Posterior vena cava (tissue), 2 donors: ENCODE measurements at regions of chr13 and their contacts with region 1.

Region 1: DNA sequence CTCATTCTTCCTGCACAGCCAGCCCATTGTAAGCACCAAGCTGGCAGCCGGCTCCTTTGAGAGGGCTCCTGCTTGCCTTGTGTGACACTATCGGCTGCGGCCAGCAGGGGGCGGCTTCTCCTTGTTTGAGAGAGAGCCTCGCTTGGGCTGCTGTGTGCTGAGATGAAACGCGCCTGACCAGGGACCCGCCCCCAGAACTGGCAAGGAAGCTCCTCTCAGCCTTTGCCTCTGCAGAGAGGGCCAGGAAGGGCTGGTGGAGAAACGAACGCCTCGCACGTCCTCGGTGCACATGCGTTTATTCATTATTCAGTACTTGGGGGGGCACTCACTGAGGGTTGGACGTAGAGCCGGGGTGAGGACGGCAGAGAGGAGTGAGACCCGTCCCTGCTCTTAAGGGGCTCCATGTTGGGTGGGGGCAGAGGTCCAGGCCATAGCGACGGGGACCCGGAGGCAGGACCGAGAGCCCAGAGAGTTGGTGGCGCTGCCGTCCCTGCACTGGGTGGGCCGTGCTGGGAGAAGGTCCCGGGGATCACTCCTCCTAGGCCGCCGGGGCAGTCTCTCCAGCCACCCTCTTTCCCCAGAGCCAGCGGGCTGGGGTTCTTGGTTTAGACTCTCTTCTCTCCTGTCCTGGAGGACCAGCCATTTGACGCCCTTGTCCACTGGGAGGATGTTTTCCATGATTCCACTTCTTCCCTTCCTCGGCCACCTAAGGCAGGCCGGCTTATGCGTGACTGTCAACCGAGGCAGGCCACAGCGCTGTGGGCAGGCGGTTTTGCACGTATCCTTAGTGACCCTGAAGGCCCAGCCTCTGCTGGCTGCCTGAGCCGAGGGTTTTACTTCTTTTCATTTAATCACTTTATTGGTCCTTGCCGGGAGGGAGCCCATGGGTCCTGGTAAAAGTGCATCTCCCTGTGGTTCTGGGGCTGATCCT is 174.5 kb downstream of the KATNAL1 start:
- DNase-seq: peak; percentile 99

Region 2: DNA sequence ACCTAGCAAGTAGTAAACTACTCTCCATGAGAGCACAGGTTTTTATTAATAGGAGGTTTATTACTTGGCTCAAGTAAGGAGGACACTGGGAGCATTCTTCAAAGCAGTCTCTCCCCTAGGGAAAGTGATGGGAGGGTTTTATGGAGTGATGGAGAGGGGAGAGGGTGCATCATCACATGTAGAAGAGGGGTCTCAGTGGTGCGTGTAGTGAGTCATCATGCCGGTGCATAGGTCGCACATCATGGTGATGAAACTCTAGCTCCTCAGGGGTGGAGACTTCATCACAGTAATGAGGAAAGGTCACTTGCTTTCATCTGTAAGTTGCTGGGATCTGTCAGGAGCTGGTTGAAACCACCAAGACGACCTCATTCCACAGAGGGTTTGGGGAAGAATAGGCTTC is 71.7 kb before region 1 on chr13:
- intact Hi-C with region 1: no loop called
- DNase-seq: no peak

Region 3: GRCh38 chr13:31150315-31150985 is 1017.6 kb after region 1 on chr13:
- intact Hi-C with region 1: no loop called
- DNase-seq: no peak

Region 4: DNA sequence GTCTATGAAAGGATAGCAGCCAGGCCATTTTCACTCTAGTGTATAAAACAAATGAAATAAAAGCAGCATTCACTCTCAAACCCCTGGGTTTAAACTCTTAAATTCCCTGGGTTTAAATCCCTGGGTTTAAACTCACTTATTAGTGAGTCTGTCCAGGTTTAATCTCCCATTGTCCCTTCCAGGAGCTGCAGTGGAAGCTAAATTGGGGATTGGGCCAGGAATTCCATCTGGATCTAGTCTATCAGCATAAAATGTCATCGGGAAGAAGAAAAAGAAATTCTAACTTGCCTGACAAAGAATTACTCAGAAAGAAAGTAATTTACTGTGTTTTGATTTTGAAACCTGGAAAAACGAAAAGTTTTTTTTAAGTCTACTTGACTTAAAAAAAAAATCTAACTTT is 1953.5 kb after region 1 on chr13:
- intact Hi-C with region 1: loop called in 1 of 2 experiments (anchors 5 kb)
- DNase-seq: no peak